ENCODE measurements at regions of chr20 and their contacts with region 1.

Region 1: GRCh38 chr20:58209652-58210397 is 18.6 kb downstream of the ANKRD60 start:
- DNase-seq: peak; percentile 88
- ATAC-seq: peak; percentile 89
- H3K4me3 ChIP-seq: no peak overlapping the region
- H3K4me3 Mint-ChIP-seq: peak overlapping the region; percentile 14
- H3K27ac ChIP-seq: no peak overlapping the region
- H3K27ac Mint-ChIP-seq: no peak overlapping the region
- H3K4me1 ChIP-seq: peaks cover 0 to 6% of the 10 kb centered on the region in 2 donors
- H3K4me1 Mint-ChIP-seq: peaks cover 3% of the 10 kb centered on the region
- H3K27me3 ChIP-seq: peaks cover 0 to 8% (median 2%) of the 10 kb centered on the region in 4 experiments
- H3K27me3 Mint-ChIP-seq: peaks cover 14% of the 10 kb centered on the region
- CTCF ChIP-seq: peak; percentile 100

Region 2: GRCh38 chr20:56554869-56555268 is 1655.0 kb before region 1 on chr20:
- CTCF ChIA-PET with region 1: interaction called, 13 read pairs
- POLR2A ChIA-PET with region 1: no interaction called
- intact Hi-C with region 1: no loop called
- DNase-seq: no peak
- ATAC-seq: peak; percentile 31
- H3K4me3 ChIP-seq: no peak overlapping the region
- H3K4me3 Mint-ChIP-seq: no peak overlapping the region
- H3K27ac ChIP-seq: no peak overlapping the region
- H3K27ac Mint-ChIP-seq: no peak overlapping the region
- H3K4me1 ChIP-seq: peaks cover 0 to 6% of the 10 kb centered on the region in 2 donors
- H3K4me1 Mint-ChIP-seq: peaks cover 8% of the 10 kb centered on the region
- H3K27me3 ChIP-seq: no peaks in the 10 kb centered on the region
- H3K27me3 Mint-ChIP-seq: no peaks in the 10 kb centered on the region
- CTCF ChIP-seq: no peak

Region 3: DNA sequence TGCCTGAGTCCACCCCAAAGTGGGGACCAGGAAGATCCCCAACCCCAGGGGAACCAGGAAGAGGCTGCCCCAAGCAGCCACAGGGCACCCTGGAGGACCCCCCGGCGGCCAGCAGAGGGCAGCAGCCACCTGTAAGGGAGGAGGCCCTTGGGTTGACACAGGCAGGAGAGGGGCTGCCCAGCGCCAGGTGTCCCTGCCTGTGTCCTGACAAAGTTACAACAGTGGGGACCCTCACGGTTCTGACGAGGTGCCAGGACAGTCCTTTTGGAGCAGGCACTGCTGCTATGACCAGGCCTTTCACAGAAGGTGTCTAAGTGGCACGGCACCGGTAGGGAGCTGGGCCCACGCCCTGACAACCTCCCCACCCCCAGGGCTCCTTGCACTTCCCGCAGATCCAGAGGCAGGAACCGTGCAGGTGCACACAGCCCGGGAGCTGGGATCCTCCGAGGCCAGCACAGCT is 1120.1 kb before region 1 on chr20:
- CTCF ChIA-PET with region 1: no interaction called
- POLR2A ChIA-PET with region 1: no interaction called
- intact Hi-C with region 1: loop called (anchors 10 kb)
- DNase-seq: peak; percentile 44
- ATAC-seq: peak; percentile 47
- H3K4me3 ChIP-seq: no peak overlapping the region
- H3K4me3 Mint-ChIP-seq: no peak overlapping the region
- H3K27ac ChIP-seq: no peak overlapping the region
- H3K27ac Mint-ChIP-seq: no peak overlapping the region
- H3K4me1 ChIP-seq: peaks cover 0 to 6% of the 10 kb centered on the region in 2 donors
- H3K4me1 Mint-ChIP-seq: peaks cover 10% of the 10 kb centered on the region
- H3K27me3 ChIP-seq: peaks cover 0 to 7% (median 0%) of the 10 kb centered on the region in 4 experiments
- H3K27me3 Mint-ChIP-seq: peaks cover 13% of the 10 kb centered on the region
- CTCF ChIP-seq: peak; percentile 70

Region 4: GRCh38 chr20:57514273-57514751 is 695.5 kb before region 1 on chr20:
- CTCF ChIA-PET with region 1: interaction called, 14 read pairs
- POLR2A ChIA-PET with region 1: no interaction called
- intact Hi-C with region 1: loop called (anchors 1 kb)
- DNase-seq: peak; percentile 60
- ATAC-seq: peak; percentile 54
- H3K4me3 ChIP-seq: no peak overlapping the region
- H3K4me3 Mint-ChIP-seq: no peak overlapping the region
- H3K27ac ChIP-seq: no peak overlapping the region
- H3K27ac Mint-ChIP-seq: no peak overlapping the region
- H3K4me1 ChIP-seq: no peaks in the 10 kb centered on the region
- H3K4me1 Mint-ChIP-seq: no peaks in the 10 kb centered on the region
- H3K27me3 ChIP-seq: peaks cover 0 to 5% (median 0%) of the 10 kb centered on the region in 4 experiments
- H3K27me3 Mint-ChIP-seq: peaks cover 7% of the 10 kb centered on the region
- CTCF ChIP-seq: peak; percentile 62

Measured in B cell (primary cell).